ENCODE measurements at regions of chr6 and their contacts with region 1.

Region 1: GRCh38 chr6:53956068-53956711 is 155.1 kb upstream of the MLIP start:
- DNase-seq: peak; percentile 51 to 68
- ATAC-seq: peak; percentile 81 to 97 (median 94)
- H3K4me3 ChIP-seq: no peak overlapping the region
- H3K27ac ChIP-seq: no peak overlapping the region
- H3K4me1 ChIP-seq: no peaks in the 10 kb centered on the region
- H3K27me3 ChIP-seq: no peaks in the 10 kb centered on the region
- CTCF ChIP-seq: peak; percentile 27 to 80 (median 73)

Region 2: GRCh38 chr6:53492860-53493634 is 463.1 kb before region 1 on chr6:
- intact Hi-C with region 1: loop called in 1 of 10 experiments (anchors 10 kb)
- DNase-seq: no peak
- ATAC-seq: peak; percentile 38 to 85 (median 70)
- H3K4me3 ChIP-seq: peak overlapping the region in 5 of 10 donors; percentile 16 to 31 (median 25)
- H3K27ac ChIP-seq: no peak overlapping the region
- H3K4me1 ChIP-seq: peaks cover 0 to 12% (median 5%) of the 10 kb centered on the region in 9 donors
- H3K27me3 ChIP-seq: no peaks in the 10 kb centered on the region
- CTCF ChIP-seq: peak; percentile 51 to 87 (median 82)

Region 3: DNA sequence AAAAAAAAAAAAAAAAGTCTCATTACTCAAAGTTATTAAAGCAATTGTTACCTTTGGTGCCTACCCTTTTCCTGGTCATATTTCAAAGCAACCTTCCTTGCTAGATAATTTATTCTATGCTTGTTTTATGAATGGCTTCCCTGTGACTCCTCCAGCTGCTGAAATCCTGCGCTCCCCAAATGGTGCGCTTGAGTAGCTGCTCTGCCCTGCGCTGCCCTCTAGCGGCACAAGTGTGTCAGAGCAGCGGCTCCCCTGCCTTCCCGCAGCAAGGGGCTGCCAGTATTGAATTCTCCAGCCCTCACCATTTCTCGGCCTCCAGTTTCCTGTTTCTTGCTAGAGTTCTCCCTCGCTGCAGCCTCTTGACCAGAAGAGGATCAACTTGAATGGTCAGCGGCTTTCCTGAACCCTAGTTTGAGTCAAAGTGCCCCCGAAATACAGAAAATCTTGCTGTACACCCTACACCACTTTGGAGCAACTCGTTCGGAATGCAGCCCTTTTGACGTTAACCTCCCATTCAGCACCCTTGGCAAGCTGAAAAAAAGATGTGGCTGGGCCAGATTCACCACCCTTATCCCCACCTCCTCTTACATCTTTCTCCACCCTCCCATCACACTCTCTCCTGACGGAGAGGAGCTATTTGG is 230.3 kb before region 1 on chr6:
- intact Hi-C with region 1: loop called in 7 of 10 experiments (anchors 5 to 10 kb)
- DNase-seq: peak; percentile 76 to 79
- ATAC-seq: peak; percentile 79 to 93 (median 89)
- H3K4me3 ChIP-seq: no peak overlapping the region
- H3K27ac ChIP-seq: no peak overlapping the region
- H3K4me1 ChIP-seq: peaks cover 0 to 10% (median 0%) of the 10 kb centered on the region in 9 donors
- H3K27me3 ChIP-seq: peaks cover 0 to 6% (median 0%) of the 10 kb centered on the region in 7 donors
- CTCF ChIP-seq: peak; percentile 90 to 97 (median 95)

Region 4: GRCh38 chr6:53734473-53735299 is 221.5 kb before region 1 on chr6:
- intact Hi-C with region 1: loop called in 6 of 10 experiments (anchors 5 to 10 kb)
- DNase-seq: peak; percentile 26 to 29
- ATAC-seq: peak in 6 of 8 donors; percentile 59 to 79 (median 69)
- H3K4me3 ChIP-seq: no peak overlapping the region
- H3K27ac ChIP-seq: no peak overlapping the region
- H3K4me1 ChIP-seq: peaks cover 0 to 8% (median 0%) of the 10 kb centered on the region in 9 donors
- H3K27me3 ChIP-seq: no peaks in the 10 kb centered on the region
- CTCF ChIP-seq: peak in 7 of 9 donors; percentile 9 to 46 (median 37)

Region 5: DNA sequence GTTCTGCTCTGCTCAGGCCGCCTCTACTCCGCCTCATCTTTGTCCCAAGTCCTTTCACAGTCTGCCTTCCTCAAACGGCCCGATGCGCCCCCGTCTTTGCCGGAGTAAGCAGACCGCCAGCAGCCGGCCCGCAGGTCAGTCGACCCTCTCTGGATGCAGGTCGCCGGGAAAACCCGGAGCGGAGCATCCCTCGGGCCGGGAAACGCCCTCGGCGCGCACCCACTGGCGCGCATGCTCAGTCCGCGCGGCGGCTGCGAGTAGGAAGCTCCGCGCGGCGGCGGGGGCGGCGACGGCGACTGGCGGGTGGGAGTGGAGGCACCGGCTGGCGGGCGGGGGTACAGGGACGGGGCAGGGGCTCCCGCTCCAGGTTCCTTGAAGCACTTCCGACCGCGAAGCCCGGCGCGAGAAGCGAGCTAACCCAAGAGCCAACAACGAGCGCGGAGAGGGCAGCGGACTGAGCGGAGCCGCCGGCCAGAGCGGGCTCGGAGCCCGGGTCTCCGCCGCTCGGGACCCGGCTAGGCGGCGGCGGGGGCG is 161.4 kb before region 1 on chr6 and contains the start of gene LRRC1:
- intact Hi-C with region 1: loop called in 9 of 10 experiments (anchors 1 to 10 kb)
- DNase-seq: peak; percentile 93 to 95
- ATAC-seq: peak; percentile 84 to 97 (median 95)
- H3K4me3 ChIP-seq: peak within 1 kb of the TSS; percentile 59 to 96 (median 91)
- H3K27ac ChIP-seq: peak within 1 kb of the TSS; percentile 21 to 88 (median 78)
- H3K4me1 ChIP-seq: peaks cover 0 to 33% (median 20%) of the 10 kb centered on the region in 9 donors
- H3K27me3 ChIP-seq: peaks cover 0 to 29% (median 0%) of the 10 kb centered on the region in 7 donors
- CTCF ChIP-seq: no peak
- total RNA-seq, gene LRRC1: 1.2 to 7.0 (median 4.7) TPM

Region 6: GRCh38 chr6:53837865-53838769 is 118.1 kb before region 1 on chr6:
- intact Hi-C with region 1: no loop called
- DNase-seq: no peak
- ATAC-seq: peak; percentile 42 to 90 (median 62)
- H3K4me3 ChIP-seq: no peak overlapping the region
- H3K27ac ChIP-seq: peak overlapping the region in 2 of 10 donors; percentile 17 to 48
- H3K4me1 ChIP-seq: peaks cover 0 to 24% (median 4%) of the 10 kb centered on the region in 9 donors
- H3K27me3 ChIP-seq: no peaks in the 10 kb centered on the region
- CTCF ChIP-seq: no peak